ENCODE measurements at regions of chr13 and their contacts with region 1.

Region 1: GRCh38 chr13:27374650-27375049 is 49.8 kb upstream of the GTF3A start:
- ATAC-seq: peak; percentile 80 to 96 (median 88)
- H3K4me3 ChIP-seq: no peak overlapping the region
- H3K27ac ChIP-seq: no peak overlapping the region
- H3K4me1 ChIP-seq: peaks cover 0 to 3% of the 10 kb centered on the region in 2 donors

Region 2: DNA sequence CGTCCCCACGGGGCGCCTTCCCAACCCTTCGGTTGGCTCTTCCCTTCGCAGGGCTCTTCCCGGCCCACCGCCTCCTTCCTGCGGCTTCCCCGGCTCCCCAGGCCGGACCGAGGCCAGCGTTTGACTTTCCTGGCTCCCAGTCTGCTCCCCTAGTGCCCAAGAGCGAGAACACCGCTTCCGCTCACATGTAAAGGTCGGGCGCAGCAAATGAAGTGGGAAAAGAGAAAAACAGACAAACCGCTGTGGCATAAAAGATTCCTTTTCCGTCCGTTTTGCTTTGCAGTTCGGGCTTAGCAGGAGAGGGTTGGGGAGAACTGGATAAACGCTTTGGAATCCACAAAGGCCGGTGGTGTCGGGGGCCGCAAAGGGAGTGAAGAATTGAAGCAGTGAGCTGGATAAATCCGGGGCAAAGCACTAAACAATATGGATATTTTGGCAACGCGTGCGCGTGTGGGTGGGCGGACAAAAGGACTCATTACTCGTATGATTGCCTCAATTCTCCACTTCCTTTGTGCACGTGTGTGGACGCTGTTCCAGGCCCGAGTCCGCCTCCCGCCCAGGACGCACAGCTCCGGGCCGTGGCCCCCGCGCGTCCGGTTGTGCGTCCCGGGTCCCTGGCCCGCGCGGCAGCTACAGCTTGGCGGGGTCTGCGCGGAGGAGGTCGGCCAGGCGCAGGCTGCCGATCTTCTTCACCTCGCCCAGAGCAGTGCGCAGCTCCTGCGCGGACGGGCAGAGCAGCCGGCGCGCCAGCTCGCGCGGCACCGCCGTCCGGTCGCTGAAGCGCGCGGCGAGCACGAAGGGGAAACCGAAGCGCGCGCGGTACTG is 603.0 kb after region 1 on chr13:
- in situ Hi-C with region 1: loop called (anchors 10 to 25 kb)
- ATAC-seq: peak in 1 of 8 experiments; percentile 19
- H3K4me3 ChIP-seq: peak overlapping the region in 1 of 5 donors; percentile 9
- H3K27ac ChIP-seq: no peak overlapping the region
- H3K4me1 ChIP-seq: peaks cover 0 to 3% of the 10 kb centered on the region in 2 donors

Region 3: DNA sequence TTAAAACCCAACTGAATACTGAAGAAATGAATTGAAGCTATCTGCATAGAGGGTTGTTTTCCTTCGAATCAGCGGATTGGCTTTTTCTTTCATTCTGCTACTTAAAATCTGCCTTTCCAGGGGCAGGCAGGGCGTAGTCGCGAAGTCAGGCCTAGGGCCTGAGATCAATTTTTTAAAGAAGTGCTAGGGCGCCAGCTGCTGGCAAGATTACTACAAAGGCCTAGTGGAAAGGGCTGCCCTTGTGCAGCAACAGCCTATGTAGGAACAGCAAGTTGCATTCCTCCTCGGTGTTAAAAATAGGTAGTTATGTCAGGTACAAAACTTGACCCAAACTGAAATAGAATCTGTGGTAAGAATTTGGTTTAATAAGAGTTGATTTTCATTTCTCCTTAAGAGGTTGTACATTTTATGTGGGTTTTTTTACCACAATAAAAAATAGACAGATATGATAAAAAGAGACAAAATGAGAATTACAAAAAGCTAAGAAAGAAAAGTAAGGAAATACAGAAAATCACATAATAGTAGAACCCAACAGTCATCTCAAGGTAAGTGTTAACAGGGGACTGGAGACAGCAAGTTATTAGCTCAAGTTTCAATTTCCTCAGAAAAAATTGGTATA is 623.4 kb after region 1 on chr13:
- in situ Hi-C with region 1: loop called in 7 of 9 experiments (anchors 25 kb)
- ATAC-seq: peak; percentile 67 to 99 (median 82)
- H3K4me3 ChIP-seq: no peak overlapping the region
- H3K27ac ChIP-seq: no peak overlapping the region
- H3K4me1 ChIP-seq: no peaks in the 10 kb centered on the region